Esophagus muscularis mucosa (tissue), 4 donors: ENCODE measurements at regions of chr13 and their contacts with region 1.

Region 1: DNA sequence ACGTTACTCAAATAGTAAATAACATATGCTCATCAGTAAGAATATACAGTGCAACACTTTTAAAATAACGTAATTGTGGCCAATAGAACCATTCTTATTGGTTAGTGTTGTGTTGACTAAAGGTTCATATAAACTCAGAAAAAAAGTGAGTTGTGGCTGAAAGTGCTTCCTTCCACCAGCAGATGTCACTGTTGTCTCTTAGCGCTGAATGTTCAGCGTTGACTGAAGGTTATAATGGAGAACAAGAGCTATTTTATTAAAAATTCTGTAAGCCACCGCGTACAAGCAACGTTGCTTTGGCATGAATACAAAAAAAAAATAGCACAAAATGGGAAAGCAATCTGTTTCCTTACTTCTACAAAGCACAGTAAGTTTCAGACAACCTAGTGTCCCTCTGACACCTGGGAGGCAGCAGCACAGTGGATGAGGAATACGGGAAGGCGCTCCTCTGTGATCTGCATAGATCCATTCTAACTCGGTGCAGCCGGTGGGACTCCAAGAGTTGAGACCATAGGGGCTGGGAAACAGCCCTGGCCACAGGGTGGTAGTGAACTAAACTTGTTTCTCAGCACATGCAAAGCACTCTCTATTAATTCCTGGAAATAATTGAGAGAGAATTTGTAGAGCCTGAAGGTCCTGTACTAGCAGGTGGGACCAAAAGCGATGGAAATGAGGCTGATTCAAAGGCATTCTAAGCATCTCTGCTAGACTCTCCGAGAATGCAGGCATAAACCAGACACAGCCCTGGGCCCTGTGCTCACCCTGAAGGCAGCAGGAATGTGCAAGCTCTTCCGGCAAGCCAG is 24.0 kb upstream of the OXGR1 start:
- DNase-seq: no peak
- H3K4me3 ChIP-seq: no peak overlapping the region
- H3K27ac ChIP-seq: no peak overlapping the region
- H3K4me1 ChIP-seq: peaks cover 0 to 7% (median 4%) of the 10 kb centered on the region in 4 donors
- H3K27me3 ChIP-seq: peaks cover 0 to 3% (median 0%) of the 10 kb centered on the region in 4 donors
- CTCF ChIP-seq: peak; percentile 81 to 93 (median 89)
- EP300 ChIP-seq: no peak
- POLR2A ChIP-seq: no peak

Region 2: DNA sequence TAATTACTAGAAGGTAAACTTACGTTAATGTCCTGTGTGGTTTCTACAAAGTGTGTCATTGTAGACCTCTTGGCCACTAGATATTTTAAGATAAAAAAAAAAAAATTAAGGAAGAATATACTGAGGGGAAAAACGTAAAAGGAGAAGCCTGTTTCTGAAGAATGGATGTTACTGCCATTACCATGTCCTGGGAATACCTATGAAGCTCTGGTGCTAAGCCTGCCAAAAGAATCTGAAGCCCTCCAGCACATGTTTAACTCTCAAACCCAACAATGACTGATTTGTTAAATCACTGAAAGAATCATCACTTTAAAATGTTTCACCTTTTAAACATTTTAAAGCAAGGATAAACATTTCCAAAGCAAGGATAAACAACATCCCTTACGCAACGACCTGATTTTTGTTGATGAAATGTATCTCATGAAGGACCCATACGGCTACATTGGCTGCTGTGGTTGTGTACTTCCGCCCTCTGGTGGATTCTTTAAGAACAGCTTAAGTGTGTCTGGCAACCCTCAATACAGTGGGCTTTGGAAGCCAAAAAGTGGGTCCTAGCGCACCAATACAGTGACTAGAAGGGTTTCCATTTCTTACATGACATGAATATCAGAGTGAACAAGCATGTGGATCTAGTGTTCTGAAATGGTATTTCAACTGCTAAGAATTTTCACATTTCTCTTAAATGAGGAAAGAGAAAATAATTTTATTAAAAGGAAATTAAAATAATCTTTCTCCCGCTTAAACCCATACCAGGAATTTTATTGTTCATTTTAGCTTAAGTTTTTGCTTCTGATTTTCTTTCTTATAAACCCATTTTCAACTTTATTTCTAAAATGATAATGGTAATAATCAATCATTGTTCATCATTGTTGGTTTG is 341.2 kb after region 1 on chr13:
- intact Hi-C with region 1: loop called (anchors 5 kb)
- DNase-seq: no peak
- H3K4me3 ChIP-seq: no peak overlapping the region
- H3K27ac ChIP-seq: peak overlapping the region in 3 of 4 donors; percentile 51 to 64 (median 53)
- H3K4me1 ChIP-seq: peaks cover 20 to 57% (median 43%) of the 10 kb centered on the region in 4 donors
- H3K27me3 ChIP-seq: no peaks in the 10 kb centered on the region
- CTCF ChIP-seq: peak; percentile 85 to 91 (median 89)
- EP300 ChIP-seq: no peak
- POLR2A ChIP-seq: no peak

Region 3: DNA sequence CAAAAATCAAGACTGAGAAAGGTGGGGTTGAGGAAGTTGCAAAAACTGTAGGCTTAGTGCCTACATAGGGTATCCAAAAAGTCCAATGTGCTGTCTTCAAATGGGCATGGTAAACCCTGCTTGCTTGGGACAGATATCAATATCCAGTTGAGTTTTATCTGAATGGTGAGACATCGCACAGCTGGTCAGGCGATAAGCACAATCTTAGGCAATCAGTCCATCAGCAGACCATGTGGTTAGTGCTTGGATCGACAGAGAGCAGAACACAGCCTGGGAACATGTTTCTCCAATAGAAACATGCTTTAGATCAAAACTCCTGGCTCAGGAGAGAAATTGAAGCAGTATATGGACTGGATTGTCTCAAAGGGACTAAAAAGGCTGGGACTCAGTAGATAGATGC is 784.0 kb after region 1 on chr13:
- intact Hi-C with region 1: loop called (anchors 5 kb)
- DNase-seq: no peak
- H3K4me3 ChIP-seq: no peak overlapping the region
- H3K27ac ChIP-seq: no peak overlapping the region
- H3K4me1 ChIP-seq: no peaks in the 10 kb centered on the region
- H3K27me3 ChIP-seq: peaks cover 0 to 6% (median 0%) of the 10 kb centered on the region in 4 donors
- CTCF ChIP-seq: no peak
- EP300 ChIP-seq: no peak
- POLR2A ChIP-seq: no peak